Left colon (tissue), 2 donors: ENCODE measurements at regions of chr21 and their contacts with region 1.

Region 1: GRCh38 chr21:26170471-26171257 is at the start of gene APP:
- DNase-seq: peak; percentile 81 to 89
- ATAC-seq: peak; percentile 69
- total RNA-seq, gene APP: 884 to 960 TPM

Region 2: DNA sequence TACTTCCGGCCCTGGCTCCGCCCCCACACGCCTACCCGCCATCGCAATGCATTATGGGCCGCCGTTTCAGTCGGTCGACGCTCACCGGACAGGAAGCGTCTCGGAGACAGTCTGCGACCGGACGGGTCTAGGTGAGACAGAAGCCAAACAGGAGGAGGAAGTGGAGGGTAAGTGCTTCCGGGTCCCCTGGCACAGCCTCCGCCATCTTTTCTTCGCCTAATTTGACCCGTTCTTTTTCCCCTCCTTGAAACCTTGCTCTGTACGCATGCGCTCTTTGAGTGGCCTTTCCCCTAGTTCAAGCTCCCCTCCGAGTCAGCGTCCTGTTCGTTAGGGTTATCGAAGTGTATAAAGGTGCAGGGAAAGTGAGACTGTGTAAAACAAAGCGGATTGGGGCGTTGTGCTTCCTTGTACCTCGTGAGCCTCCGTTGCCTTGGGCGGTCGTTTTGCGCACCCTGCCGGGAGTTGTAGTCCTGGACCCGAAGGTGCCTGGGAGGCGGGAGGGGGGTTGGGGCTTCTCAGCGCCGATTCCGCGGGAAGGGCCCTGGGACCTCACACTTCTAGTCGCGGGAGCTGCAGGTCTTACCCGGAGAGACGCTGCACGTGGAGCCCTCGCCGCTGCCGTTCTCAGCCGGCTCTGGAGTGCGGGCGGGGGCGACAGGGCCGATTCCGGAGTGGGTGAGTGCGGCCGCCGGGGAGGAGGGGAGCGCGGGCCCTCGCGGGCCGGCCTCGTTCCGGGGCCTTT is 435.6 kb before region 1 on chr21 and contains the starts of genes ATP5PF and GABPA:
- intact Hi-C with region 1: loop called in 1 of 2 experiments (anchors 10 kb)
- DNase-seq: peak; percentile 98
- ATAC-seq: peak; percentile 89
- total RNA-seq, gene ATP5PF: 200 to 219 TPM
- total RNA-seq, gene GABPA: 21.7 to 23.1 TPM

Region 3: GRCh38 chr21:25881525-25882376 is 288.9 kb before region 1 on chr21:
- intact Hi-C with region 1: loop called in 1 of 2 experiments (anchors 5 kb)
- DNase-seq: peak in 1 of 2 donors; percentile 69
- ATAC-seq: peak; percentile 58

Region 4: GRCh38 chr21:25895565-25896205 is 275.0 kb before region 1 on chr21:
- intact Hi-C with region 1: loop called in 1 of 2 experiments (anchors 5 kb)
- DNase-seq: no peak
- ATAC-seq: peak; percentile 50

Region 5: GRCh38 chr21:26236281-26236680 is 65.6 kb after region 1 on chr21:
- intact Hi-C with region 1: no loop called
- DNase-seq: no peak
- ATAC-seq: no peak